ENCODE measurements at regions of chr20 and their contacts with region 1.

Region 1: GRCh38 chr20:9359561-9360308 is 154.7 kb upstream of the LAMP5 start:
- DNase-seq: peak in 5 of 6 donors; percentile 13 to 59 (median 32)
- ATAC-seq: peak in 3 of 4 donors; percentile 89 to 91 (median 90)
- H3K4me3 ChIP-seq: peak overlapping the region in 1 of 4 donors; percentile 17
- H3K27ac ChIP-seq: no peak overlapping the region
- H3K4me1 ChIP-seq: no peaks in the 10 kb centered on the region
- H3K27me3 ChIP-seq: no peaks in the 10 kb centered on the region
- CTCF ChIP-seq: peak in 3 of 4 donors; percentile 11 to 35 (median 32)

Region 2: GRCh38 chr20:8782804-8783203 is 576.9 kb before region 1 on chr20:
- intact Hi-C with region 1: loop called in 2 of 3 experiments (anchors 10 kb)
- DNase-seq: no peak
- ATAC-seq: no peak
- H3K4me3 ChIP-seq: no peak overlapping the region
- H3K27ac ChIP-seq: no peak overlapping the region
- H3K4me1 ChIP-seq: no peaks in the 10 kb centered on the region
- H3K27me3 ChIP-seq: no peaks in the 10 kb centered on the region
- CTCF ChIP-seq: no peak

Region 3: GRCh38 chr20:8853805-8854338 is 505.9 kb before region 1 on chr20:
- intact Hi-C with region 1: loop called in 1 of 3 experiments (anchors 10 kb)
- DNase-seq: peak in 3 of 6 donors; percentile 10 to 38 (median 20)
- ATAC-seq: peak; percentile 88 to 97 (median 95)
- H3K4me3 ChIP-seq: no peak overlapping the region
- H3K27ac ChIP-seq: peak overlapping the region in 1 of 4 donors; percentile 15
- H3K4me1 ChIP-seq: no peaks in the 10 kb centered on the region
- H3K27me3 ChIP-seq: no peaks in the 10 kb centered on the region
- CTCF ChIP-seq: peak; percentile 64 to 88 (median 82)

Region 4: DNA sequence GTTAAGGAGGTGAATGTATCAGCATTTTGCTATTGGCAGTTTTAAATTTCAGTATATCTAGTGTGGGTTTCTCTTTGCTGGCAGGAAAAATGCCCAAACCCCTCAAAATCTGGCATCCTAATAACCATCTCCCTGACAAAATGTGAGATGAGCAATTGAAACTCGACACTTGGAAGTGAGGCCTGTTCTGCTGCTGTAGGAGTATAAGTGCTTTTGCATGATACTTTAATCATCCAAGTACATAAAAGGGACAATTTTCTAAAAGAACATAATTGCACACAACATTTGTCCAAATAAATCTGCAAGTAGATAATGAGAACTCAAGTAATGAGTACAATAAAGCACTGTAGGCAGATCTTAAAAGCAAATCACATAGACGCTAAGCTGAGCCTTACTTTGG is 191.1 kb after region 1 on chr20:
- intact Hi-C with region 1: no loop called
- DNase-seq: no peak
- ATAC-seq: no peak
- H3K4me3 ChIP-seq: no peak overlapping the region
- H3K27ac ChIP-seq: no peak overlapping the region
- H3K4me1 ChIP-seq: no peaks in the 10 kb centered on the region
- H3K27me3 ChIP-seq: no peaks in the 10 kb centered on the region
- CTCF ChIP-seq: no peak

Measured in pancreas (tissue), 10 donors.